GM12878 (cell line): ENCODE measurements at regions of chr3 and their contacts with region 1.

Region 1: GRCh38 chr3:171447338-171447760 is 12.9 kb downstream of the TNIK start:
- DNase-seq: no peak
- ATAC-seq: peak; percentile 37
- H3K4me3 ChIP-seq: no peak overlapping the region
- H3K27ac ChIP-seq: no peak overlapping the region
- H3K4me1 ChIP-seq: peaks cover 28% of the 10 kb centered on the region
- H3K27me3 ChIP-seq: no peaks in the 10 kb centered on the region
- CTCF ChIP-seq: no peak
- EP300 ChIP-seq: no peak
- POLR2A ChIP-seq: no peak
- RAD21 ChIP-seq: no peak

Region 2: GRCh38 chr3:171410186-171410585 is 37.2 kb before region 1 on chr3:
- CTCF ChIA-PET with region 1: interaction called, 4 read pairs
- POLR2A ChIA-PET with region 1: interaction called, 12 read pairs
- RAD21 ChIA-PET with region 1: interaction called, 11 read pairs
- SMC1A ChIA-PET with region 1: interaction called, 10 read pairs
- in situ Hi-C with region 1: no loop called
- intact Hi-C with region 1: no loop called
- DNase-seq: no peak
- ATAC-seq: no peak
- H3K4me3 ChIP-seq: no peak overlapping the region
- H3K27ac ChIP-seq: no peak overlapping the region
- H3K4me1 ChIP-seq: peaks cover 21% of the 10 kb centered on the region
- H3K27me3 ChIP-seq: no peaks in the 10 kb centered on the region
- CTCF ChIP-seq: no peak
- EP300 ChIP-seq: no peak
- POLR2A ChIP-seq: no peak
- RAD21 ChIP-seq: no peak

Region 3: DNA sequence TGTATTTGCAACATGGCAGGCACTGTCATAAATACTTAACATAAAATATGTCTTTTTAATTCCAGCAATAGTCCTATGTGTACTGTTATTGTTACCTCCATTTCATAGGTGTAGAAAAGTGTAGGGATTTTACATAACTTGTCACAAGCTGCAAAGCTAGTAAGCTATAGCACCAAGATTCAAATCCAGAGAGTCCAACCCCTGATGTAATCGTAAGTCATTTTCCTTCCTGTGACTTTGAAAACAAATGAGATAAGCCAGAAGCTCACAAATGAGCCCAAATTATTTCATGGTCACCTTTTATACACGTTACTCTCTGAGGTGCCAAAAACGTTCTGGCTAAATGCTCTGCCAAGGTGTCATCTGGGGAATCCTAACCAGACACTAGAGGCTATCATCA is 11.0 kb before region 1 on chr3:
- CTCF ChIA-PET with region 1: interaction called, 6 read pairs
- POLR2A ChIA-PET with region 1: interaction called, 7 read pairs
- RAD21 ChIA-PET with region 1: interaction called, 15 read pairs
- SMC1A ChIA-PET with region 1: interaction called, 21 read pairs
- in situ Hi-C with region 1: no loop called
- intact Hi-C with region 1: no loop called
- DNase-seq: no peak
- ATAC-seq: peak; percentile 40
- H3K4me3 ChIP-seq: no peak overlapping the region
- H3K27ac ChIP-seq: no peak overlapping the region
- H3K4me1 ChIP-seq: peaks cover 11% of the 10 kb centered on the region
- H3K27me3 ChIP-seq: no peaks in the 10 kb centered on the region
- CTCF ChIP-seq: no peak
- EP300 ChIP-seq: no peak
- POLR2A ChIP-seq: no peak
- RAD21 ChIP-seq: no peak